ENCODE measurements at regions of chr1 and their contacts with region 1.

Region 1: DNA sequence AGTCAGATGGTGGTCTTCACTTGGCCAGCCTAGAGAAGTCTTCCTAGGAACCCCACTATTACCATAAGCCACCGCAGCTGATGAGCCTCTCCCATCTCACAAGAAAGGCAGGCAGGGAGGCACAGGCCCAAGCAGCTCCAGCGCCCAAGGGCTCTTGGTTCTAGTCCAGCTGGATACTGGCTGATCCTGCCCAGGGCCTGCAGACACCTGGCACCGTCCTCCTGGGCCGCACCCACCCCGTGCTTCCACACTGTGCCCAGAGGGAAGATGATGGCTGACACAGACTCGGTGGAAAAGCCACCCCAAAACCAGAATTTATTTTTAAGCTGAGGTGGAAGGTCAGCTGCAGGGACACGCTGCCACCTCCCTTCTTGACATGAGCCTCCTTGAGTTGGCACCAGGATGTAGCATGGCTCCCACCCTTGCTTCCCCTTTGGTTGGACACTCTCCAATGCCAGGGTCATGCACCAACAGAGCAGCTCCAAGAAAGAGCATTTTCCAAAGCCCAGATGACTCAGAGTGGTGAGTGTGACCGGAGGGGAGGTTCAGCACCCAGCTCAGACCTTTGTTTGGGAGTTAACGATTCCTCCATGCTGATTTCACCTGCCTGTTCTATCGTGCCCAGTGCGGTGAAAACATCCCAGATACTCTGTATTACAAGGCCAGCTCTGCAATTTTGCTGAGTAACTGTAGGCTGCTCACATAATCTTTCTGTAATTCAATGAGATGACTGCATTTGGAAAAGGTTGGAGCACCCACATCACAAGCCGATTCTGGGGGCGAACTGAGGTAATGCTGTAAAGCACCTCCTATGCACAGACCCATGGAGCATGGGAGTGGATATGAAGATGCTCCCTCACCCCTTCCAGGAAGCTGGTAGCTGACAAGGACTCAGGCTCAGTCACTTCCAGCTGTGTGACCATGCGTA is 63.1 kb upstream of the SLC2A1 start:
- DNase-seq: peak; percentile 99
- H3K4me3 ChIP-seq: peak overlapping the region in 1 of 3 experiments; percentile 31
- H3K27ac ChIP-seq: peak overlapping the region; percentile 83
- H3K4me1 ChIP-seq: peaks cover 41% of the 10 kb centered on the region
- H3K27me3 ChIP-seq: no peaks in the 10 kb centered on the region
- CTCF ChIP-seq: no peak

Region 2: GRCh38 chr1:42730988-42731387 is 290.8 kb before region 1 on chr1:
- CTCF ChIA-PET with region 1: no interaction called
- dilution Hi-C with region 1: no loop called
- in situ Hi-C with region 1: no loop called
- intact Hi-C with region 1: no loop called
- DNase-seq: peak; percentile 76
- H3K4me3 ChIP-seq: no peak overlapping the region
- H3K27ac ChIP-seq: no peak overlapping the region
- H3K4me1 ChIP-seq: peaks cover 16% of the 10 kb centered on the region
- H3K27me3 ChIP-seq: no peaks in the 10 kb centered on the region
- CTCF ChIP-seq: peak; percentile 42 to 69

Region 3: GRCh38 chr1:42777852-42778251 is 244.0 kb before region 1 on chr1:
- CTCF ChIA-PET with region 1: no interaction called
- dilution Hi-C with region 1: no loop called
- in situ Hi-C with region 1: no loop called
- intact Hi-C with region 1: no loop called
- DNase-seq: no peak
- H3K4me3 ChIP-seq: no peak overlapping the region
- H3K27ac ChIP-seq: no peak overlapping the region
- H3K4me1 ChIP-seq: no peaks in the 10 kb centered on the region
- H3K27me3 ChIP-seq: no peaks in the 10 kb centered on the region
- CTCF ChIP-seq: peak; percentile 77 to 83

Region 4: DNA sequence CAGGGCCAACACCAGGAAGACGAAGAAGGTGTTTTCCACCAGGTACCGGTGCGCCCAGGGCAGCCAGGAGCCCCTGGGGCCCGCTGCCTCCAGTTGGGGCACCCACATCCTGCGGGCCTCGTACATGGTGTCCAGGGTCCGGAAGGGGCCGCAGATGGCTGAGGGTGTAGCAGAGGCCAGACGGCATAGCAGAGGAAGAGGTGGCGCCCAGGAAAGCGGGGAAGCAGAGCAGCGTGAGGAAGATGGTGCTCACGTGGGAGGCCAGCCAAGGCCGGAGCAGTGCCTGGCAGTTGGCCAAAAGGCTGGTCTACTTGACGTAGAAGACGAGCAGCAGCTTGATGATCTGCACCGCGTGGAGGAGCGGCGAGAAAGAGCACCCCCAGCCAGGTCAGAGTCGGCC is 135.0 kb before region 1 on chr1:
- CTCF ChIA-PET with region 1: no interaction called
- dilution Hi-C with region 1: no loop called
- in situ Hi-C with region 1: no loop called
- intact Hi-C with region 1: no loop called
- DNase-seq: no peak
- H3K4me3 ChIP-seq: no peak overlapping the region
- H3K27ac ChIP-seq: no peak overlapping the region
- H3K4me1 ChIP-seq: no peaks in the 10 kb centered on the region
- H3K27me3 ChIP-seq: peaks cover 9% of the 10 kb centered on the region
- CTCF ChIP-seq: no peak

Region 5: GRCh38 chr1:42936309-42937078 is 85.3 kb before region 1 on chr1:
- CTCF ChIA-PET with region 1: no interaction called
- dilution Hi-C with region 1: no loop called
- in situ Hi-C with region 1: no loop called
- intact Hi-C with region 1: loop called (anchors 1 kb)
- DNase-seq: peak; percentile 95
- H3K4me3 ChIP-seq: no peak overlapping the region
- H3K27ac ChIP-seq: peak overlapping the region; percentile 90
- H3K4me1 ChIP-seq: peaks cover 99% of the 10 kb centered on the region
- H3K27me3 ChIP-seq: no peaks in the 10 kb centered on the region
- CTCF ChIP-seq: no peak

Region 6: DNA sequence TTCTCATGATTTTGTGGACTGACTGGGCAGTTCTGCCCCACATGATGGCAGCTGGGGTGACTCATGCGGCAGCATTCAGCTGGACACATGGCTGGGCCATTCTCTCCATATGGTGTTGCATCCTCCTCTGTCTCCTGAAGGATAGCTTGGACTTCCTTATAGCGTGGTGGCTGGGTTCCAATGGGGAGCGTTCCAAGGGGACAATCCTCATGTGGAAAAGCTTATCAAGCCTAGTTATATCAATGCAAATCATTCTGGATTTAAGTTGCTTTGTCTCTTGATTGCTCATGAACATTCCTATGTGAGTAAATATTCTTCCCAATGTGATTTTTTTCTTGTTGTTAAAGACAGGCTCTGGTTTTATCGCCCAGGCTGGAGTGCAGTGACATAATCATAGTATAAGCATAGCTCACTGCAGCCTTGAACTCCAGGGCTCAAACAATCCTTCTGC is 49.9 kb before region 1 on chr1:
- CTCF ChIA-PET with region 1: no interaction called
- dilution Hi-C with region 1: no loop called
- in situ Hi-C with region 1: loop called in 1 of 2 experiments (anchors 5 kb)
- intact Hi-C with region 1: loop called (anchors 1 kb)
- DNase-seq: no peak
- H3K4me3 ChIP-seq: no peak overlapping the region
- H3K27ac ChIP-seq: no peak overlapping the region
- H3K4me1 ChIP-seq: peaks cover 14% of the 10 kb centered on the region
- H3K27me3 ChIP-seq: no peaks in the 10 kb centered on the region
- CTCF ChIP-seq: no peak

Region 7: DNA sequence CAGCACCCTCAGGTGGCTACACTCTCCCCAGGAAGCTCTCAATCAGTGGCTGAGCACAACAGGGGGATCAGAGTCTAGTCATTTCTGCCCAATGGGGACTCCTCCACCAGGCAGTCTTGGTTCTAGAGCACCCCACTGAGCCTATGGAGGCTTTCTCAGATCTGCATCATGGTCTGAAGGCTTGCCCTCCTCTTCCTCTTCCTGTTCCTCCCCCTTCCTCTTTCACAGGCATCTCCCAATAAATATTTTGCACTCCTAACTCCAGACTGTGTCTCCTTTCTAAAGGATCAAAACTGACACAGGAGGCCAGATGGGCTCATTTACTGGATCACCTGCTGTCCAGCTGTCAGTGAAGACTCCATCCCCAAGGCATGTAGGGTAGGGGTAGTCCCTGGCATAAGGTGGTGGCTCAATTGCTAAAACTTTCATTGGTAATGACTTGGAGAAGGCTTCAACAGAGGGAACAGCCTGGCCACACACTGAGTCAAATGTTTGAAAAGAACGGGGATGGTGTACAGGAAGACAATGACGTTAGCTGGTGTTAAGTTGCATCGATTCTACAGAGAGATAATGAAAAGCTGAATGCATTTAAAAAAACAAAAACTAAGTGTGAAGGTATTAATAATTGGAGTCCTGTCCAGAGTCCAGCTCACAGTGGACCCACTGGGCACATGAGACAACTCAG is 21.1 kb after region 1 on chr1:
- CTCF ChIA-PET with region 1: no interaction called
- dilution Hi-C with region 1: no loop called
- in situ Hi-C with region 1: no loop called
- intact Hi-C with region 1: loop called (anchors 1 kb)
- DNase-seq: no peak
- H3K4me3 ChIP-seq: no peak overlapping the region
- H3K27ac ChIP-seq: no peak overlapping the region
- H3K4me1 ChIP-seq: no peaks in the 10 kb centered on the region
- H3K27me3 ChIP-seq: no peaks in the 10 kb centered on the region
- CTCF ChIP-seq: no peak

Region 8: DNA sequence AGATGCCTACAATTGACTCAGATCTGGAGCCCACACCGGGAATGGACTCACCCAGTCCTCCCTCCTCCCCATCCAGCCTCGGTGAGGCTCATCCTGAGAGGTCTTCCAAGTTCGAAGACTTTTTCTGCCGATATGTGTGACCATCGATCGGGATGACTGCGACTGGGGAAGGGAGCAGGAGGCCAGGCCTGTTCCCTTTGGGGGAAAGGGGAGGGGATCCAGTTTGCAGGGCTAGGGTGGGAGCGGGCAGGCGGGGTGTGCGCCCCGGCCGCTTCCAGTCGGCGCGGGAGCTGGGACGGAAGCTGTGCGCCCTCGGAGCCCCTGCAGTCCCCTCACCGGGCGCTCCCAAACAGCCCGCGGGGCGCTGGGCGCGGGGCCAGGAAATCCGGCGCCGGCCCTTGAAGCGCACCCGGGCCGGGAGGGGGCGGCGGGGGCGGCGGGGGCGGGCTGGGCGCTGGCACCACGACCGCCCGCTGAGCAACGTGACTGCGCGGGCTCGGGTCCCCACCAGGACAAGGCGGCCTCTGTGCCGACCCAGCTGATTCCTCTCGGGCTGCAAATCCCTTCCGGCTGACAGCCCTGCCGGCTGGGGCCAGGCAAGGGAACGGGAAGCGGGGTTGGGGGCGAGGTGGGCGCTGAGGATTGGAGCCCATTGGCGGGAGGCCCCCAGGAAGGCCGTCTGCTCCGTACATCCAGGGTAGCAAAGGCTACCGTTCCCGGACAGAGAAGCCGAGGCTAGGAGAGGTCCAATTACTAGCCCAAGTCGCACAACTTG is 46.4 kb after region 1 on chr1:
- CTCF ChIA-PET with region 1: interaction called, 11 read pairs
- dilution Hi-C with region 1: no loop called
- in situ Hi-C with region 1: no loop called
- intact Hi-C with region 1: loop called (anchors 2 kb)
- DNase-seq: no peak
- H3K4me3 ChIP-seq: no peak overlapping the region
- H3K27ac ChIP-seq: no peak overlapping the region
- H3K4me1 ChIP-seq: peaks cover 11% of the 10 kb centered on the region
- H3K27me3 ChIP-seq: no peaks in the 10 kb centered on the region
- CTCF ChIP-seq: no peak

Region 9: DNA sequence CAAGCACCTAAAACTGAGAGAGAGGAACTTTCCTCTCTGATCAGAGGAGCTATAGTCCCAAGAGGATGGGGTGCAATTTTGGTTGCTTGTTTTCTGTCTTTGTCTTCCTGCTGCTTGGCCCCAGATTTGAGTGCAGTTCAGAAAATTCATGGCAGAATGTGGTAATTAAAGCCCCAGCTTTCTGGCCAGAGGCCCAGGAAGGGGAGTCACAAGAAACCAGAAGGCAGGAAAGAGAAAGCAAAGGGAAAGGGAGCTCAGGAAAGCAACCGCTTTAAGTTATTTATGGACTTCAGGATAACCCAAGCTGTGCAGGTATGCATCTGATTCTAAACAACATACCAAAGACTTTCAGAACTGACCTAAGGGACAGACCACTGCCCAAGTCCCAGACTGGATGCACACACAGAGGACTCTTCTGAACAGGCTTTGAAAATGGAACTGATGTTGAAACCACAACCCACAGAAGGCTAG is 774.3 kb after region 1 on chr1:
- CTCF ChIA-PET with region 1: no interaction called
- dilution Hi-C with region 1: no loop called
- in situ Hi-C with region 1: no loop called
- intact Hi-C with region 1: no loop called
- DNase-seq: peak; percentile 27
- H3K4me3 ChIP-seq: no peak overlapping the region
- H3K27ac ChIP-seq: peak overlapping the region; percentile 16
- H3K4me1 ChIP-seq: peaks cover 32% of the 10 kb centered on the region
- H3K27me3 ChIP-seq: no peaks in the 10 kb centered on the region
- CTCF ChIP-seq: no peak

Measured in mammary epithelial cell (primary cell).